ENCODE measurements at regions of chr1 and their contacts with region 1.

Region 1: DNA sequence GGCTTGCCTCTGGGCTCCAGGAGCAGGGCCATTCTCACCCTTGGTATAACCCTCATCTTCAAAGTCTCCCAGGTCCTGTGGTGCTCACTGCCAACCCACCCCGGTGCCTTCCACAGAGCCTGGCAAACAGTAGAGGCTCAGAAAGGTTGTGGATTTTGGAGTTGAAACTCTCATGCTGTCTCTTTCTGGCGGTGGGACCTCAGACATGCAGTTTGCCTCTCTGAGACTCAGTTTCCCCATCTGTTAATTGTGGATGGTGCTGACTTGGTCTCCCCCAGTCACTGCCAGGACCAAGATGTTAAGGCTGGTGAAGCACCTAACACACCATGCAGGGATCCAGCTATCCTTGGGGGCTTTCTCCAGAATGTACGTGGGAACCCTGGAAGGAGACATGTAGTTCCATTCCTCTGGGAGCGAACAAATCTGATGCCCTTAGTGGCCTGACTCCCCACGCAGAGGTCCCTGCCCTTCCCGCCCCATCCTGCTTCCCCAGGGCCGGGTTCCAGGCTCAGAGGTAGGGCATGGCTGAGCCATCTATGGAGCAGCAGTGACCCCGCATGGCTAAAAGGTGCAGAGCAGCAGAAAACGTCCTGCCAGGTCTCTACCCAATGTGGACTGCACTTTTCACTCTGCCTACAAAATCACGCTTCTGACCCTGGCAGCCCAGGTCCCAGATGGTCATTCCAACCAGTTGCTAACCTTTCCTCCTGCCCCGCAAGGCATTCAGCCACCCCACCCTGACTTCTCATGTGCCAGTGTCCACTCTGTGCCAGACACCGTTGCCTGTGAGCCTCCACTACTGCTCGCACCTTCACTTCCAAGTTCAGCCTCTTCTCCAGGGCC is 9.2 kb upstream of the TTC22 start:
- DNase-seq: peak; percentile 81
- H3K4me3 Mint-ChIP-seq: no peak overlapping the region
- H3K27ac Mint-ChIP-seq: no peak overlapping the region
- H3K4me1 Mint-ChIP-seq: peaks cover 76% of the 10 kb centered on the region
- H3K27me3 Mint-ChIP-seq: peaks cover 3% of the 10 kb centered on the region

Region 2: DNA sequence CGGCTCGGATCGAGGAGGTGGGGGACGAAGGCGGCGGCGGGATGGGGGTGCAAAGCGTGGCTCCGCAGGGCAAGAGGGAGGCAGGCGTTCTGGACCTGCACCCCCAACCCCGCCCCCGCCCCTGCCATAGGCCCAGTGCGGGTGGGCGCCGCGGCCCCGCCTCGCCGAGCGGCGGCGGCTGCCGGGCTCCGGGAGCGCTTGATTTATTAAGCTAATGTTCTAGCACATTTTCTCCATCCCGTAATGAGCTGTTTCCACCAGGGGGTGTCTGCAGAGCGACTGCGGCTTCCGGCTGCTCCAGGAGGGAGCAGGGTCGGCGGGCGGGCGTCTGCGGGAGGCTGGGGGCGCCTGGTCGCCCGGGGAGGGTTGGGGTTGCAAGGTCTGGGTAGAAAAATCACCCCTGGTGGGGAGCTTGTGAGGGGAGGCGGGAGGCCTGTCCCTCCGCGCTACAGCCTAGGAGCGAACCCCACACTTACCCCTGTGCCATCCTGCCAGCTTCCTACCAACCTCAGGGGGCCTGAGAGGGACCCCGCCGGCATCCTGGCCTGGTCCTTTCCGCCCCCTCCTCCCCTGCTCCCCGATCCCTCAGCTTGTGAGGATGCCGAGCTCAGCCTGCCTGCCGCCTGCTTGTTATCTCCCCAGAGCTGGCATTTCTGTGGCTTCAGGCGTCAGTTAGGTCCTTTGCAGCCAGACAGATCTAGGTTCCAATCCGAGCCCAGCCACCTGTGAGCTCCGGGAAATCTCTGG is 310.8 kb before region 1 on chr1:
- CTCF ChIA-PET with region 1: interaction called, 10 read pairs
- POLR2A ChIA-PET with region 1: no interaction called
- DNase-seq: peak; percentile 39
- H3K4me3 Mint-ChIP-seq: no peak overlapping the region
- H3K27ac Mint-ChIP-seq: no peak overlapping the region
- H3K4me1 Mint-ChIP-seq: peaks cover 9% of the 10 kb centered on the region
- H3K27me3 Mint-ChIP-seq: peaks cover 51% of the 10 kb centered on the region

Region 3: GRCh38 chr1:54671985-54672608 is 138.2 kb before region 1 on chr1:
- CTCF ChIA-PET with region 1: interaction called, 16 read pairs
- POLR2A ChIA-PET with region 1: interaction called, 6 read pairs
- DNase-seq: peak; percentile 85
- H3K4me3 Mint-ChIP-seq: no peak overlapping the region
- H3K27ac Mint-ChIP-seq: no peak overlapping the region
- H3K4me1 Mint-ChIP-seq: peaks cover 18% of the 10 kb centered on the region
- H3K27me3 Mint-ChIP-seq: peaks cover 5% of the 10 kb centered on the region